Mammary epithelial cell (primary cell): ENCODE measurements at regions of chr17 and their contacts with region 1.

Region 1: GRCh38 chr17:73255671-73256181 is 6.0 kb downstream of the CPSF4L start:
- DNase-seq: peak; percentile 53
- H3K4me3 ChIP-seq: no peak overlapping the region
- H3K27ac ChIP-seq: no peak overlapping the region
- H3K4me1 ChIP-seq: no peaks in the 10 kb centered on the region
- H3K27me3 ChIP-seq: no peaks in the 10 kb centered on the region
- CTCF ChIP-seq: peak; percentile 93 to 99

Region 2: DNA sequence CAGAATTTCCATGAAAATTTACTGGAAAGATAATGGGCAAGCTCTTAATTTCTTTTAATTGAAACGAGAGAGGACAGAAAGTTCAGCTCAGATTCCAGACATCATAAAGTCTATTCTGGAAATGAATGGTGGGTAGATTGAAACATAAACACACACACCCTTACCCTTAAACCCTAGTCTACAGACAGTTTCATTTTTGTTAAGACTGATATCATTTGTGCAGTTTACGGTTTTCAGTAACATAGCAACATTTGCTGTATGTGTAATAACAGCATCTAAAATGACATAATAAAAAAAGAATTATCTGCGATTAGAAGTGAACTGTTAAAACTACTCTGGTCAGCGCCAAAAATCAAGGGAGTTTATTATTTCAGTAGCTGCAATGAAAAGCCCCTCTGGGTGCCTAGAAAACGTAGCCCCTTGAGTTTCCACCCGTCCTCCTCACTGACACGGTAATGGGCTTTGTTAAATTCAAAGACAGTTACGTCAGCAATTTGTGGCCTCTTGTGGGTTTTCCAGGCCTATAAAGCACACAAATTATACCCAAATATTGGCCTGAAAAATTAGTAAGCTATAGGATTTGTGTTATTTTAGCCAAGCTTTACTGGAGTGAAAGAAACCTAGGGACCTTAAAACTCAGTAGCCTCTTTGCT is 1655.5 kb before region 1 on chr17:
- CTCF ChIA-PET with region 1: no interaction called
- dilution Hi-C with region 1: no loop called
- in situ Hi-C with region 1: no loop called
- intact Hi-C with region 1: no loop called
- DNase-seq: no peak
- H3K4me3 ChIP-seq: no peak overlapping the region
- H3K27ac ChIP-seq: no peak overlapping the region
- H3K4me1 ChIP-seq: no peaks in the 10 kb centered on the region
- H3K27me3 ChIP-seq: no peaks in the 10 kb centered on the region
- CTCF ChIP-seq: no peak

Region 3: GRCh38 chr17:73371285-73371684 is 115.6 kb after region 1 on chr17:
- CTCF ChIA-PET with region 1: interaction called, 7 read pairs
- dilution Hi-C with region 1: no loop called
- in situ Hi-C with region 1: loop called (anchors 5 kb)
- intact Hi-C with region 1: loop called (anchors 1 kb)
- DNase-seq: peak; percentile 71
- H3K4me3 ChIP-seq: no peak overlapping the region
- H3K27ac ChIP-seq: no peak overlapping the region
- H3K4me1 ChIP-seq: peaks cover 6% of the 10 kb centered on the region
- H3K27me3 ChIP-seq: no peaks in the 10 kb centered on the region
- CTCF ChIP-seq: no peak